AG04450 (cell line): ENCODE measurements at regions of chr3 and their contacts with region 1.

Region 1: GRCh38 chr3:167380004-167380689 is at the start of gene ZBBX:
- DNase-seq: peak; percentile 53
- H3K4me3 ChIP-seq: peak within 1 kb of the TSS; percentile 67
- H3K27ac ChIP-seq: no peak within 1 kb of the TSS
- H3K27me3 ChIP-seq: no peaks in the 10 kb centered on the region
- CTCF ChIP-seq: peak; percentile 98
- polyA plus RNA-seq, gene ZBBX: not detected in 2 replicates

Region 2: DNA sequence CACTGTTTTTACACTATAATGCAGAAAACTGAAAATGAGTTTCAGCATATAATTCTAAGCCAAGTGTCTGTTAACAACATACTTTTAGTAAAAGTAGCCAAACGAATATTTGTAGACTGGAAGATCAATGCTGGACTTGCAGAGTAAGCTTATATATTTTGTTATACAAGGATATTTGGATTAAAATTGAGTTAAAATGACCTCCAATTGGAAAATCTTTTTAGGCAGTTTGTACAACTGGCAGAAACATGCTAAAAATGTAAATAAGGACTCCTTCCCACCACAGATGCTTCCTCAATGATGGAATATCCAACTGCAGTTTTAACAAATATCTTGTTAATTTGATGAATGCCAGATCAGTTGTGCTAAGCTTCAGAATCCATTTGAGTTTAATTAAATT is 25.4 kb before region 1 on chr3:
- CTCF ChIA-PET with region 1: interaction called, 12 read pairs
- POLR2A ChIA-PET with region 1: no interaction called
- DNase-seq: no peak
- H3K4me3 ChIP-seq: no peak overlapping the region
- H3K27ac ChIP-seq: no peak overlapping the region
- H3K27me3 ChIP-seq: no peaks in the 10 kb centered on the region
- CTCF ChIP-seq: no peak

Region 3: DNA sequence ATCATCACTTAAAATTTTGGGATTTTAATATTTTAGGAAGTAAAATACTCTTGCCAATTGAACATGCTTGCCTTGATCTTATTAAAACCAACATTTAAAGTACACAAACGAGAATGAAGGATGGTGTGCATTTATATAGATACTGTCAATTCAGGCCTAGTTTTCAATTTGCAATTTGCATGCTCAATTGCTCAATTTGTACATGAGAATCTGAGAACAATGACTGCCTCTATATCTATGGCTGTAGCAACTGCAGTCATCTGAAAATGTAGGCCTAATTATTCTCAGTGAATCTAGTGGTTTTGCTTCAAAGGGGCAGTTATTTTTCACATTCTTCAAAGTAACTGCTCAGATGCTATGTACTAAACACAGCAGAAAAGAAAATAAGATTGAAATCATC is 18.8 kb before region 1 on chr3:
- CTCF ChIA-PET with region 1: interaction called, 10 read pairs
- POLR2A ChIA-PET with region 1: no interaction called
- DNase-seq: no peak
- H3K4me3 ChIP-seq: no peak overlapping the region
- H3K27ac ChIP-seq: no peak overlapping the region
- H3K27me3 ChIP-seq: no peaks in the 10 kb centered on the region
- CTCF ChIP-seq: no peak

Region 4: GRCh38 chr3:167493244-167493643 is 113.1 kb after region 1 on chr3:
- CTCF ChIA-PET with region 1: no interaction called
- POLR2A ChIA-PET with region 1: no interaction called
- DNase-seq: no peak
- H3K4me3 ChIP-seq: no peak overlapping the region
- H3K27ac ChIP-seq: no peak overlapping the region
- H3K27me3 ChIP-seq: no peaks in the 10 kb centered on the region
- CTCF ChIP-seq: peak; percentile 23; the same call in 1 of the 2 replicates

Region 5: DNA sequence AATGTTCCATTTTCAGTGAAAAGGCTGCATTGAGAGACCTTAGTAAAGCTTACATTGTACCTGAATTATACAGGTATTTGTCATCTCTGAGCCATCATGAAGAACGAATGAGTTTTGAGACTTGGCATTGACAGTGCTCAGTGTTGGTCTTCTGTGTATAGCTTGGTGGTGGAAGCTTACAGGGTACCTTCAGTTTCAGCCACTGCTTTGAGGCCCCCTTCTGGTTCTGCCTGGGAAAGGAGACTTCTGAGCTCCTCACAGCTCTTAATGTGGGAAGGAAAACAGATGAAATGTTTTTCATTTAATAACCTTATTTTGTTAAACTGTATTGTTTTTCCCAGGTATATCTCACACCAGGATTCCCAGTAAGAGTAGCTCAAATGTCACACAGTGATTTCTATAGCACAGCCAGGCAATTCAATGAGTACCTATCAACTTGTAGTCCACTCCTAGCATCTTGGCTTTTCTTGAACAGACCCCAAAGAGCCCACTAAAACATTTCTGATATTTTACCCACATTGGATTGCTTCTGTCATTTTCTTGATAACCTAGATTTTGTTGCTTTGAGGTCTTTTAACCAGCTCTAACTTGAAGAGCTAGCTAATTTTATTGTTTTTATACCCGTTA is 360.9 kb after region 1 on chr3:
- CTCF ChIA-PET with region 1: interaction called, 39 read pairs
- POLR2A ChIA-PET with region 1: no interaction called
- DNase-seq: no peak
- H3K4me3 ChIP-seq: no peak overlapping the region
- H3K27ac ChIP-seq: no peak overlapping the region
- H3K27me3 ChIP-seq: peaks cover 7% of the 10 kb centered on the region
- CTCF ChIP-seq: peak; percentile 76

Region 6: DNA sequence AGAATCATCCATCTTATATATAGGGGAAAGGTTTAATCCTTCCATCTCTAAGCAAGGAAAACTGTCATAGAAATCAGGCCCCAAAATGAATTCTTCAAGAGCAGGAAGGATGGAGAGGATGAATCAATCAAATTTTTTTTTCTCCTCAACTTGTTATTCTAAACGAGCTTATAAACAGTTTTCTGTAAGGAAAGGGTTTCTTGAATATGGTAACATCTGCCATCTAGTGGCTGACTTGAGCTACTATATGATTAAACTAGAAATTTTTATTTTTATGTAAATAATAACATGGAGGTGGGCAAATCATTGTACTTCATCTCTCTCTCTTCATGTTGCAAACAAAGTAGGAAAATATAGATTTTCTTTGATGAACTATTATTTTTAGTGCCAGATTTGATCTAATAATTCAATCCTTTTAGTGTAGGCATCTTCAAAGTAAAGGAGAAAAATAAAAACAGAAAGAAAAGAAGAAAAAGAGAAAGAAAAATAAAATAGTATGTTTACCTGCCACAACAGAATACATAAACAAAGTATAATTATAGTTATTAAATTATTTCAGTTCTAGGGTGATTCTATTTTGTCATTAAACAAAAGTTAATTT is 502.0 kb after region 1 on chr3:
- CTCF ChIA-PET with region 1: interaction called, 46 read pairs
- POLR2A ChIA-PET with region 1: no interaction called
- DNase-seq: peak; percentile 3
- H3K4me3 ChIP-seq: no peak overlapping the region
- H3K27ac ChIP-seq: no peak overlapping the region
- H3K27me3 ChIP-seq: no peaks in the 10 kb centered on the region
- CTCF ChIP-seq: peak; percentile 70